Cardiac septum (tissue), 1 donor: ENCODE measurements at regions of chr3 and their contacts with region 1.

Region 1: GRCh38 chr3:186617038-186617946 is 4.4 kb downstream of the AHSG start:
- DNase-seq: peak; percentile 94

Region 2: DNA sequence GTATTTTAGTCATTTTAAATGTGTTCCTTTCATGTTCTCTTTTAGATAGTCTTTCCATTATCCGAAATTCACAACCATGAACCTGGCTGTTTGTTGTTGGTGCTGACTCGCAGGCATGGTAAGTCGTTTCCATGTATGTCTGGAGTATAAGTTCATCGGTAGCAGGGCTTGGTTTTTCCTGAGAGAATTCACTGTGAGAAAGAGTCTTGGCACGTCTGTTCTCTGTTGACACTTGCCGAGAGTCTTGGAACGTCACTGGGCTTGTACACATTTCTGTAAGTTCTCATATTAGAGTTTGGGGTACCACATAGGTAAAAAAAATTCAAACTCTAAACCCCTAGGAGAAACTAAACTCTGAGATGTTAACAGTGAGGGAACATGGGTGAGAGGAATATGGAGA is 136.7 kb after region 1 on chr3:
- intact Hi-C with region 1: loop called (anchors 2 kb)
- DNase-seq: no peak

Region 3: GRCh38 chr3:186826976-186827731 is 209.9 kb after region 1 on chr3:
- intact Hi-C with region 1: loop called (anchors 2 kb)
- DNase-seq: peak; percentile 90